ENCODE measurements at regions of chr10 and their contacts with region 1.

Region 1: DNA sequence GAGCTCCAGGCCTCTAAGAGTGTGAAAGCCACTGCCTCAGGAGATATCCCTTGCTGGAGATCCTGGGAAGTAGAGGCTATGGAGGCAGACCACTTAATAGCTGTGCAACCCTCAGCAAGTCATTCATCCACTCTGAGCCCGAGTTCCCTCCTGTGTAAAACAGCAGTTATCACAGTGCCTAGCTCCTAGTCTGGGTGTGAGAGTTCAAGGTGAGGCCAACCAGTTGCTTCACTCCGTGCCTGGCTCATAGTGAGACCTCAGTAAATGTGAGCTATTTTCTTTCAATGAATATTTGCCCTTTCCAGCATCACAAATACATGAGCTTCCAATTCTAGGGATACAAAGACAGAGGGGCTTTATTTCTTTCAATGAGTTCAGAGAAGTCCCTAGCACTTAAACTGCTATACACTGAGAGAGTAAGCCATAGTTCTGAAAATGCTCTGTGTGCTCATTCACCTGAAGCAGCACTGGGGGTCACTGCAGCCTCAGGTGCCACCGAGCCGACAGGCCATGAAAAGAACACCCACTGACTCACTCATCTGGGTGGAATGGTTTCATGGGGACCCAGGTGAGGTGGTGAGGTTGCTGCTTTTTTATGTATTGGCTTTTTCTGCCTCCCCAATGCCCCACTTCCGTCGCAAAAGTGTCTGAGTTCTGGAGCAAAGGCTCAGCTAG is 259.8 kb downstream of the KCNMA1 start:
- DNase-seq: no peak
- ATAC-seq: no peak

Region 2: DNA sequence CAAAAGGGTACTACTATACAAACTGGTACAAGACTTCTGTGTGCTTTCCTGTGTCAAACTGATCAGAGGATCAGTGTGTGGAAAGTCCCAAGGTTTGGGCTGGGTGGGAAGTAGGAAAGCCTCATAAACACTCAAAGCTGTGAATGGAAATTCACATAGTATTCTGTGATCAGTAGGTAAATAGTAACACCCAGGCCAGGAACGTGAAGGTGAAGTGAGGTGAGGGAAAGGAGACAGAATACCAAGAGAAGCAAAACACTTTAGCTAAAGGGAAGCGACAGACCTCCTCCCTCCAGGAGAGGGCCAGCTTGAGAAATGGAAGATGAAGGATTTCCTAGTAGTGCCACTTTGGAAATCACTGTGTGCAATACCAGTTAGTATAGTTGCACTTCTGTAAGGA is 192.1 kb before region 1 on chr10:
- intact Hi-C with region 1: loop called in 1 of 2 experiments (anchors 10 kb)
- DNase-seq: no peak
- ATAC-seq: peak; percentile 65

Region 3: DNA sequence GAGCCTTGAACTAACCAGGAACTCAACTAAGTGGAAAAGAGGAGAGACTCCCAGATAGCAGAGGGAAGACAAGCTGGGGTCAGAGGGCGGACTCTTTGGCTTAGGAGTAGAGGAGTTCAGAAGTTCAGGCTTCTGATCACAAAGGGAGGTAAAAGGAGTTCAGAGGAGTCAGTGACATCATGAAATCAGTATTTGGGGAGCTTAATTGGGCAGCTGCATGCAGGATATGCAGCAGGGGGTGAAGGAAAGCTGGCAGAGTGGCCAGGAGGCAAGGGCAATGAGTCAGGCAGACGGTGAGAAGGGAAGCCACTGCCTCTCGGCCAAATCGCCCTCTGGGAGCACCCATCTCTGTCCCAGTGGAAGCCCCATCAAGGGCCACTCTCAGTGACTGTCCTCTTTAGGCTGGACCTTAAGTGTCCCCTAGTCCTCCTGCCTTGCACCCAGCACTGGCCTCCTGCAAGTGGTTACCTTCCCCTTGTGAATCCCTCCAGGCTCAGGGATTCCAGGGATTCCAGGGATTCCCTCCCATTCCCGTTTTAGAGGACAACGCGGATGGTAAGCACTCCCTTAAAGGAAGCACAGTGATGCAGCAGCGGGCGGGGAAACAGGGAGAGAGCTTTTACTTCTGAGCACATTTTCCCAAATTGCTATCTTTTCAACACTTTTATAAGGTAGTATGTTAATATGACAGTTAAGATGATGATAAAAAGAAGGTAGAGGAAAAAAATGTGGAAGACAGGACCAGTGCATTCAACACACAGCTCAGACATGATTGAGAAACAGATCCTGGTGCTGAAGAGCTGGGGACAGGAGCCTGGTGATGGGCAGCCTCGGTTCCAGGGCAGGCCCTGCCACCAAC is 187.1 kb after region 1 on chr10:
- intact Hi-C with region 1: no loop called
- DNase-seq: no peak
- ATAC-seq: peak; percentile 21

Measured in left colon (tissue), 2 donors.